IMR-90 (cell line): ENCODE measurements at regions of chr5 and their contacts with region 1.

Region 1: GRCh38 chr5:173623296-173623771 is 6.9 kb upstream of the BOD1 start:
- DNase-seq: no peak
- ATAC-seq: no peak
- H3K4me3 ChIP-seq: no peak overlapping the region
- H3K27ac ChIP-seq: no peak overlapping the region
- H3K4me1 ChIP-seq: no peaks in the 10 kb centered on the region
- H3K27me3 ChIP-seq: peaks cover 22% of the 10 kb centered on the region
- CTCF ChIP-seq: no peak
- POLR2A ChIP-seq: no peak
- RAD21 ChIP-seq: no peak

Region 2: DNA sequence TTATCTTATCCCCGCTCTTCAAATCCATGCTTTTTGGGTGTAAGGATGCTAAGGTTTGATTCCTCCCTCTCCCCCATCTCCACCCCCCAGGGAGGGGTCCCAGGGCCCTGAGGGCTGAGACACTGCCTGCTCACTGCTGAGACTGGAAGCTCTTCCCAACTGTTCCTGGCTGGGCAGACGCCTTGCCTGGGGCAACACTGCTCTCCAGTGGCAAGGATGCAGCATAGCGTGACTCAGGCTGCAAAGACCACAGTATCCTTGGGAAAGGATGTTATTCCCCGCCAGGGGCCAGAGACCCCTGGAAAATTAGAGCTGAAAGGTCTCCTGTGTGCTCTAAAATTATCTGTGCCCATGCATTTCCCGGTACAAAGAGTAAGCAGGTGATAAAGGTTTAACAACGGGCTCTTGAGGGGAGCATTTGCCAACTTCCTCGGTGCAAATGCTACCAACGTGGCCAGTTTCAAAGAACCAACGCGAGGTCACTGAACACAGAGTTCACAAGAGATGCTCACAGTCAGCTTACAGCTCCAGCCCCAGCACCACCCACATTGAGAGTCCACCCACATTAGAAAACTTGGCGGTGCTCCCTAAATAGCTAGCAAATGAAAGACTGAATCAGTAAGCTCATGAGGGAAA is 694.0 kb after region 1 on chr5:
- CTCF ChIA-PET with region 1: interaction called, 3 read pairs
- POLR2A ChIA-PET with region 1: interaction called, 4 read pairs
- dilution Hi-C with region 1: no loop called
- in situ Hi-C with region 1: loop called (anchors 5 kb)
- intact Hi-C with region 1: no loop called
- DNase-seq: peak; percentile 53
- ATAC-seq: peak; percentile 100
- H3K4me3 ChIP-seq: no peak overlapping the region
- H3K27ac ChIP-seq: no peak overlapping the region
- H3K4me1 ChIP-seq: no peaks in the 10 kb centered on the region
- H3K27me3 ChIP-seq: peaks cover 24% of the 10 kb centered on the region
- CTCF ChIP-seq: peak; percentile 83
- POLR2A ChIP-seq: no peak
- RAD21 ChIP-seq: peak; percentile 91